AG04449 (cell line): ENCODE measurements at regions of chr17 and their contacts with region 1.

Region 1: GRCh38 chr17:60571551-60571950 is 28.4 kb upstream of the PPM1D start:
- DNase-seq: no peak
- H3K4me3 ChIP-seq: no peak overlapping the region
- CTCF ChIP-seq: no peak

Region 2: GRCh38 chr17:60525685-60526514 is 45.7 kb before region 1 on chr17 and contains the start of gene APPBP2:
- CTCF ChIA-PET with region 1: interaction called, 15 read pairs
- POLR2A ChIA-PET with region 1: interaction called, 7 read pairs
- DNase-seq: no peak
- H3K4me3 ChIP-seq: peak within 1 kb of the TSS; percentile 96
- CTCF ChIP-seq: no peak

Region 3: DNA sequence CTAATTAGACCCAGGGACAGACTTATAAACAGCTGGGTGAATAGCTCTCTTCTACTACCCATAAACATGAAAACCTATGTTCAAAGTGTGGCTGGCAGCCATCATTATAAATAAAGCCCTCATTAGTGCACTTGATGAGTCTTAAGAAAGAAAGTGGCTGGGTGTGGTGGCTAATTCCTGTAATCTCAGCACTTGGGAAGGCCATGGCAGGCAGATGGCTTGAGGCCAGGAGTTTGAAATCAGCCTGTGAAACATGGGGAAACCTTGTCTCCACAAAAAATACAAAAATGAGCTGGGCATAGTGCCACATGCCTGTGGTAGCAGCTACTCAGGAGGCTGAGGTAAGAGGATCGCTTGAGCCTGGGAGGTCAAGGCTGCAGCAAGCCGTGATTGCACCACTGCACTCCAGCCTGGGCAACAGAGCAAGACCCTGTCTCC is 17.2 kb before region 1 on chr17:
- CTCF ChIA-PET with region 1: interaction called, 54 read pairs
- POLR2A ChIA-PET with region 1: interaction called, 10 read pairs
- DNase-seq: peak; percentile 78
- H3K4me3 ChIP-seq: no peak overlapping the region
- CTCF ChIP-seq: no peak

Region 4: DNA sequence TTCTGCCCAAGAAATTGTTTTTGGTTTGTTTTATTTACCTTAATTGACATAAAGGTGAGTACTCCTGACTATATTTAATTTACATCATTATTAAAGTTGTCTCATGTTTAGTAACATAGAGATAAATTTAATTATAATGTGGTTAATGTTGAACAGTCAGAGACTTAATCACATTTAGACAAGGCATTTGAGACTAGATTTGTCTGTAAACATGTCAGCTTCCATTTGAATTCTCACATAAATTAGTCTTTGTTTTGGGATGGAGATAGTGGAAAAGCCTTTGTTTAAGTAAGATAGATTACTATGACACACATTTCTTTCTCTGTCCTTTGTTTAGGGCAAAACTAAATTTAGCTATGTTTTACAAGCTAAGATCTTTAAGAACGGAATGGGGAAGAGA is 87.6 kb after region 1 on chr17:
- CTCF ChIA-PET with region 1: no interaction called
- POLR2A ChIA-PET with region 1: no interaction called
- DNase-seq: no peak
- H3K4me3 ChIP-seq: no peak overlapping the region
- CTCF ChIP-seq: no peak